Activated CD4-positive, alpha-beta memory T cell treated with anti-CD3 and anti-CD28 coated beads for 36 hours (primary cell): ENCODE measurements at regions of chr11 and their contacts with region 1.

Region 1: GRCh38 chr11:35391922-35392813 is 27.2 kb downstream of the SLC1A2 start:
- DNase-seq: peak; percentile 89
- H3K4me3 Mint-ChIP-seq: no peak overlapping the region
- H3K27ac Mint-ChIP-seq: no peak overlapping the region
- H3K4me1 Mint-ChIP-seq: peaks cover 29% of the 10 kb centered on the region
- H3K27me3 Mint-ChIP-seq: peaks cover 4% of the 10 kb centered on the region

Region 2: GRCh38 chr11:34585735-34586487 is 806.3 kb before region 1 on chr11:
- CTCF ChIA-PET with region 1: interaction called, 39 read pairs
- POLR2A ChIA-PET with region 1: no interaction called
- intact Hi-C with region 1: loop called (anchors 1 kb)
- DNase-seq: no peak
- H3K4me3 Mint-ChIP-seq: no peak overlapping the region
- H3K27ac Mint-ChIP-seq: no peak overlapping the region
- H3K4me1 Mint-ChIP-seq: no peaks in the 10 kb centered on the region
- H3K27me3 Mint-ChIP-seq: peaks cover 14% of the 10 kb centered on the region

Region 3: GRCh38 chr11:34916015-34916842 is 475.9 kb before region 1 on chr11 and contains the starts of genes APIP and PDHX:
- CTCF ChIA-PET with region 1: interaction called, 4 read pairs
- POLR2A ChIA-PET with region 1: no interaction called
- intact Hi-C with region 1: loop called (anchors 2 kb)
- DNase-seq: peak; percentile 98
- H3K4me3 Mint-ChIP-seq: peak within 1 kb of the TSS; percentile 91
- H3K27ac Mint-ChIP-seq: peak within 1 kb of the TSS; percentile 88
- H3K4me1 Mint-ChIP-seq: peaks cover 37% of the 10 kb centered on the region
- H3K27me3 Mint-ChIP-seq: no peaks in the 10 kb centered on the region
- total RNA-seq, gene APIP: 31.2 to 32.9 TPM
- total RNA-seq, gene PDHX: 34.5 to 35.5 TPM

Region 4: GRCh38 chr11:34997952-34998528 is 394.1 kb before region 1 on chr11:
- CTCF ChIA-PET with region 1: interaction called, 9 read pairs
- POLR2A ChIA-PET with region 1: no interaction called
- intact Hi-C with region 1: loop called (anchors 1 kb)
- DNase-seq: no peak
- H3K4me3 Mint-ChIP-seq: peak overlapping the region; percentile 7
- H3K27ac Mint-ChIP-seq: peak overlapping the region; percentile 25
- H3K4me1 Mint-ChIP-seq: peaks cover 19% of the 10 kb centered on the region
- H3K27me3 Mint-ChIP-seq: no peaks in the 10 kb centered on the region

Region 5: DNA sequence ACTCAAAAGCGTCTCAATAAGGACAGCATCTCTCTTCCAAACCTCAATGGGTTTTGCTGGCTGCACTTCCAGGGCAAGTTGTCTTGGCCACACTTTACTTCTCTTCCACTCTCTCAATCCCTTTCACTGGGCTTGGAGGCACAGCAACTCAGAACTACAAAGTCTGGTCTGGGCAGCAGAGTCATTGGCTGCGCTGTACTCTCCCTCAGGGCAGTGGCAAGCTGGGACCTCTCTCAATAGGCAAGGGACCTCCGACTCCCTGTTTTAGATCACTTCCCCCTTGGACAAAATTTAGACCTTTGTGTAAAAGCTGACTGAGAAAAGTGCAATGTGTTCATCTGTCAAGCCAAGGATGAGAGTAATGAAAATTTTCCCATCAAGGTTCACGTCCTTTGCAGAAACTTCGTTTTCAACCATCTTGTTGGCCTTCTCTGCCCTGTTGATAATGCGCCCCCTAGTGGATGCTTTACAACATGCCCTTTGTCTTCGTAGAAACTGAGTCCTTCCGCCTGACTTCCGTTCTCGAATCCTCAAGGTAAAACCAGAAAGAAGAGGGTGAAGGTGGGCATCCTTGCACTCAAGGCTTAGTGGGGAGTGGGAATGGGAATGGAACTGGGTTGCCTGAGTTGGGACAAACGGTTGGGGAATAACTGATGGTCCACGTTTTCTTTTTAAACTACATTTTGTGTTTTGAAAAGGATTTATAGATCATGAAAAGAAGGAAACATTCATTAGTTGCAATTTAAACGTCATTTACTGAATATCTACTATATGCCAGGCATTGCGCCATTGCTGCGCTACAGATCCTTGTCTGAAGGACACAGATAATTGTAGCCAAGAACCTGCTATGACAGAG is 154.1 kb before region 1 on chr11:
- CTCF ChIA-PET with region 1: interaction called, 7 read pairs
- POLR2A ChIA-PET with region 1: no interaction called
- intact Hi-C with region 1: loop called (anchors 2 kb)
- DNase-seq: peak; percentile 68
- H3K4me3 Mint-ChIP-seq: no peak overlapping the region
- H3K27ac Mint-ChIP-seq: no peak overlapping the region
- H3K4me1 Mint-ChIP-seq: peaks cover 72% of the 10 kb centered on the region
- H3K27me3 Mint-ChIP-seq: no peaks in the 10 kb centered on the region

Region 6: DNA sequence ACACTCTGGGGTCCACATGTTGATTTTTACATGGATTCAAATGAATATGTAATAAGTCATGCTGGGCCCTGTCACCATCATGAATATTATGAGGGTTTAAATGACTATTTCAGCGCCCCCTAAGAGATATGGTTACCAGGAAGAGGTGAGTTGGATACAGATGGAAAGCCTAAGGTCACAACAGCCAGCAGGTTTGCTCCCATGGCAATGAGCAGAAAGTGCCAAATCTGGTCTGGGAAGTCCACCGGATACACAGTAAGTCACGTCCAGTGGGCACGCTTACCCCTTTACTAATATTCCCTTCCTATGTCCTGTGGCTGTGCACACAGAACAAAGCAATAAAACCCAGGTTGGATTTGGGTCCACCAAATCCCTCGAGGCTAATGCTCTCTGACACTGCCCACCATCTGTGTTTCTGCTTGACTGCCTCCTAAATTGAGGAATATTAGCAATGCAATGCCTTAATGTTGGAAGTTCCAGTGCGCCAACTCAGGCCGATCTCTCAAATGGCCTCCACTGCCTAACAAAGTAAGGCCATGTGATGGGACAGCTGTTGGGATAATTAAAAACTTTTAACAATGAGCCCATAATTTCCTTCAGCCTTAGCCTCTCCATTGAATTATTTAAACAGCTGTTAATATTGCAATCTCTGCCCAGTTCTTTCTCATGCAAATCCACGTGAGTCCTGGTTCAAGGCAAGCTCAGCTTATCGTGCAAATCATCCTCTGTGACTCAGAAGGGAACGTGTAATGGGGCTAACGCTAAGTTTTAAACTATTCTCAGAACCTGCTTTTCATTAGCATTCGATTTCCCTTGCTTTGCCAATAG is 70.4 kb before region 1 on chr11:
- CTCF ChIA-PET with region 1: no interaction called
- POLR2A ChIA-PET with region 1: no interaction called
- intact Hi-C with region 1: no loop called
- DNase-seq: no peak
- H3K4me3 Mint-ChIP-seq: no peak overlapping the region
- H3K27ac Mint-ChIP-seq: no peak overlapping the region
- H3K4me1 Mint-ChIP-seq: peaks cover 14% of the 10 kb centered on the region
- H3K27me3 Mint-ChIP-seq: no peaks in the 10 kb centered on the region

Region 7: DNA sequence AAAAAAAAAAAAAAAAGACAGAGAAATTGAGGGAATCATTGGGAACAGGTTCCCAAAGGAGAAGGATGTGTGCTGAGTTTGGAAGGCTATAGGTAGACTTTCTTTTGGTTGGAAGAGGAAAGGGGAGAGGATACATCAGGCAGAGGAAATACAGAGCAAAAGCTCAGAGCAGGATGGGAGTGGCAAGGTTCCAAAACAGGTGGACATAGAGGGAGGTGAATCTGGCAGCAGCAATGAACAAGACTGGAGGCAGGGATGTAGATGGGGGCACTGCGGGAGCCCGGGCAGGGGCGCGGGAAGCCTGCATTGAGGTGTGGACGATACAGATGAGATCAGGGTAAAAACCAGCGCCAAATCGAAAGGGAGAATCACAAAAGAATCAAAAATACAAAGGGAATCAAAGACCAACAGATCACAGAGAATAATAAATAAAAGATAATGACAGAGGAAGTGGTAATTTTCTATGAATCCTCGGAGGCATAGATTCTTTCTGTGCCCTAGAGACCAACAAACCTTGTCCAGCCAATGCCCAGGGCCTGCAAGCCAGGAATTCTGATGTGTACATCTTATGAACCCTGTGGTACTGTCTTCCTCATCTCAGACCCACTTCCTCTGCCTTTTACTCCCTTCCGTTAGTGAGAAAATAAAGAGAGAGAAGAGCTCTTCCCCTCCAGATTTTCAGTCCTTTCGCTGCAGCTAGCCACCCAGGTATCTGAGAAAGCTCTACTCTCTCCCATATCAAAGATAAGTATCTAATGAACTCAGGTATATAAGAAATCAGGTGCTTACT is 43.1 kb before region 1 on chr11:
- CTCF ChIA-PET with region 1: interaction called, 12 read pairs
- POLR2A ChIA-PET with region 1: no interaction called
- intact Hi-C with region 1: no loop called
- DNase-seq: no peak
- H3K4me3 Mint-ChIP-seq: no peak overlapping the region
- H3K27ac Mint-ChIP-seq: peak overlapping the region; percentile 26
- H3K4me1 Mint-ChIP-seq: peaks cover 31% of the 10 kb centered on the region
- H3K27me3 Mint-ChIP-seq: no peaks in the 10 kb centered on the region